ENCODE measurements at regions of chr10 and their contacts with region 1.

Region 1: DNA sequence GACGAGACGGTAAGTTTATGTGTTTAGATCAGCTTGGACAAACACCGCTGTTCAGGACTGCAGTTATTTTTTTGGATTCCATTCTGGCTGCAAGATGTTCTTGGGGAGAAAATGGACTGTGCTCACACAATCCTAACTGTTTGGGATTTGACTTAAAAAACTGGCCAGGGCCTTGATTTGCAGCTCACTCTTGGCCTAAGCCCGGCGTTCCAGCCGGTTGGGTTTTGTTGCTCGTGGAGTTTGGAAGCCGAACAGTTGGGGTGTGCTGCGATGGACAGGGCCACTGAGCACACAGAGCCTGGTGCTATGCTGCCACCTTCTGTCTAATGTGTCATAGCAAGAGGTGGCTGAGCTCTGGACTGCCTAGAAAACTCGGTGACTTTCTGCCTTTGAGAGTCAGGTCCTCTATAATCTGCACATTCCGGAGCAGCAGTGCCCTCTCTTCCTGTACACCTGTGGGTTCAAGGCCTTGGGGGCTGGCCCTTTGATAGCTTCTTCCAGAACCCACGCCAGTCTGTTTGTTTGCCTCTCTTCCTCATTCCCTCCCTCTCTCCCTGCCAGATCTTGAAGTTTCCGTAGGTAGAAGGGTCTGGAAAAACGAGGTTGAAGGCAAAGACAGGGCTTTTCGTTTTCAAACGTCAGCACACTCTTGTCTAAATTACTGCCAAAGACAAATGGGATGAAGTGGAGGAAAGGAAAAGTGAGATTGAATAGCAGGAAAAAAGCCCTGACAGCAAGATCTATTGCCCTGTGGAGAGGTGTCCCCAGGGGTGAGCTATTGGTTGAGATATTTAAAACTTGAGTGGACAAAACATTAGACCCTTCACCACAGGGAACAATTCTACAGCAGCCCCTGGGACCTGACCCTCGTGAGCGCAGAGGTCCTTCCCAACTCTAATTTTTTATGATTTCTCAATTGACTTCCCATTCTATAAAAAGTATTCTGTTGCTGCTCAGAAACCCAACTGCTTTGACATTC is 167.5 kb upstream of the HABP2 start:
- DNase-seq: peak; percentile 79
- H3K4me3 ChIP-seq: no peak overlapping the region
- H3K27ac ChIP-seq: peak overlapping the region; percentile 42 to 59 (median 48)
- H3K4me1 ChIP-seq: peaks cover 7 to 42% (median 12%) of the 10 kb centered on the region in 4 donors
- H3K27me3 ChIP-seq: no peaks in the 10 kb centered on the region
- CTCF ChIP-seq: peak; percentile 69 to 85 (median 71)
- EP300 ChIP-seq: no peak
- POLR2A ChIP-seq: no peak

Region 2: GRCh38 chr10:112471878-112472487 is 913.3 kb before region 1 on chr10:
- in situ Hi-C with region 1: loop called in 2 of 4 experiments (anchors 25 kb)
- intact Hi-C with region 1: no loop called
- DNase-seq: no peak
- H3K4me3 ChIP-seq: no peak overlapping the region
- H3K27ac ChIP-seq: no peak overlapping the region
- H3K4me1 ChIP-seq: peaks cover 0 to 14% (median 4%) of the 10 kb centered on the region in 4 donors
- H3K27me3 ChIP-seq: no peaks in the 10 kb centered on the region
- CTCF ChIP-seq: peak; percentile 59 to 73 (median 64)
- EP300 ChIP-seq: no peak
- POLR2A ChIP-seq: no peak

Region 3: GRCh38 chr10:112565434-112566053 is 819.8 kb before region 1 on chr10:
- in situ Hi-C with region 1: loop called in 2 of 4 experiments (anchors 25 kb)
- intact Hi-C with region 1: no loop called
- DNase-seq: peak; percentile 32
- H3K4me3 ChIP-seq: no peak overlapping the region
- H3K27ac ChIP-seq: no peak overlapping the region
- H3K4me1 ChIP-seq: peaks cover 0 to 13% (median 2%) of the 10 kb centered on the region in 4 donors
- H3K27me3 ChIP-seq: no peaks in the 10 kb centered on the region
- CTCF ChIP-seq: peak; percentile 55 to 85 (median 68)
- EP300 ChIP-seq: no peak
- POLR2A ChIP-seq: no peak

Region 4: GRCh38 chr10:112721080-112721698 is 664.1 kb before region 1 on chr10:
- in situ Hi-C with region 1: loop called in 1 of 4 experiments (anchors 25 kb)
- intact Hi-C with region 1: no loop called
- DNase-seq: no peak
- H3K4me3 ChIP-seq: no peak overlapping the region
- H3K27ac ChIP-seq: no peak overlapping the region
- H3K4me1 ChIP-seq: peaks cover 0 to 10% (median 5%) of the 10 kb centered on the region in 4 donors
- H3K27me3 ChIP-seq: no peaks in the 10 kb centered on the region
- CTCF ChIP-seq: peak; percentile 60 to 74 (median 68)
- EP300 ChIP-seq: no peak
- POLR2A ChIP-seq: no peak

Region 5: DNA sequence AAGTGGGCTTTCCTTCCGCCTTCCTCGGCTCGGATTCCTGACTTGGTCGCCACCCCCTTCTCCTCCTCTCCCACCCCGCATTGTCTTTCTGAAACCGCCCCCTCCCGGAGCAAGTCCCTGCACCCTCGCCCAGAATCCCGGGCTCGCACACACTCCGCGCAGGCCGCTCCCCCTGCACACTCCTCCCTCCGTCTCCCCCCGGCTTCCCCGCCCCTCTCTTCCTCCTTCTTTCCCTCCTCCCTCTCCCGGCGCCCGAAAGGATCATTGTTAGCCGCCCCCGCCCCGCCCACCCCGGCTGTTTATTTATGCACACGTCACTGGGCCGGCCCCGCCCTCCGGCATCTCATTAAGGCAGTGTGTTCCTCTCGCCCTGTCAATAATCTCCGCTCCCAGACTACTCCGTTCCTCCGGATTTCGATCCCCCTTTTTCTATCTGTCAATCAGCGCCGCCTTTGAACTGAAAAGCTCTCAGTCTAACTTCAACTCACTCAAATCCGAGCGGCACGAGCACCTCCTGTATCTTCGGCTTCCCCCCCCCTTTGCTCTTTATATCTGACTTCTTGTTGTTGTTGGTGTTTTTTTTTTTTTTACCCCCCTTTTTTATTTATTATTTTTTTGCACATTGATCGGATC is 435.3 kb before region 1 on chr10 and contains the start of gene TCF7L2:
- in situ Hi-C with region 1: loop called in 2 of 4 experiments (anchors 25 kb)
- intact Hi-C with region 1: loop called (anchors 5 kb)
- DNase-seq: peak; percentile 96
- H3K4me3 ChIP-seq: peak within 1 kb of the TSS; percentile 61 to 91 (median 86)
- H3K27ac ChIP-seq: peak within 1 kb of the TSS; percentile 95 to 98 (median 96)
- H3K4me1 ChIP-seq: peaks cover 11 to 57% (median 44%) of the 10 kb centered on the region in 4 donors
- H3K27me3 ChIP-seq: no peaks in the 10 kb centered on the region
- CTCF ChIP-seq: no peak
- EP300 ChIP-seq: no peak
- POLR2A ChIP-seq: peak; percentile 85
- total RNA-seq, gene TCF7L2: 84.6 to 249 (median 137) TPM

Region 6: DNA sequence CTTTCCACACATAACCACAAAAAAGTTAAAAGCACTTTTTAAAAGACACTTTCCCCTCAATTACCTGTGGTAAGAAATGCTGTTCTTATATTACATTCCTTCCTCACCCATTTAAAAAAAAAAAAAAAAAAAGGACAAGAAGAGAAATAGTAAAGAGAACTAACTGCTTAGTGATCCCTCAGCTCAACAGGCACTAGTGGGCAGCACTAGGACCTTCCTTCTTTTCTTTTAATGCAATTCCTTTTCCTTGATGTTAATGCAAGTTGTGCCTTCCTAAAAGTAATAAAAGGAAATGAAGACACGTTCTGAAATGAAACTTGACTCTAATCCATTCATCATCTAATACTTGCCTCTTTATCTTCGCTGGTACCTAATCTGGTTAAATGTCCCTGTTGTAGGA is 245.6 kb before region 1 on chr10:
- in situ Hi-C with region 1: no loop called
- intact Hi-C with region 1: loop called (anchors 10 kb)
- DNase-seq: no peak
- H3K4me3 ChIP-seq: no peak overlapping the region
- H3K27ac ChIP-seq: peak overlapping the region in 2 of 4 donors; percentile 61 to 71
- H3K4me1 ChIP-seq: peaks cover 5 to 22% (median 10%) of the 10 kb centered on the region in 4 donors
- H3K27me3 ChIP-seq: no peaks in the 10 kb centered on the region
- CTCF ChIP-seq: no peak
- EP300 ChIP-seq: no peak
- POLR2A ChIP-seq: no peak

Region 7: DNA sequence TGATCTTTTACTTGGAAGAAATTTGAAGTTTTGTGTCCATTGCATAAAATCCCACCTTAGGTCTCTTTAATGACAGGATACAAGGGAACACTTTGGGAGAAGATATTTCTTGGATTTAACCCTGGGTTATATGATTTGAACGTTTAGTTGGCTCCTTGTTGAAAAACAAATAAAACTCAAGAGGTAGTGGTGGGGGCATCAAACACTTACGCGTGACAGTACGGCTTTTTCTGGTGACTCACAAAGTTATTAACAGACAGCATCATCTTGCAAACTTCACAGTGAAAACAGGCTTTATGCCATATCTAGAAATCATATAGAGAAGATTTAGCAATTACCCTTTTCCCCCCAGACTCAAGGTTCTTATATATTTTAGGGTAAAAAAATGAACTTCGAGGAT is 277.8 kb after region 1 on chr10:
- in situ Hi-C with region 1: no loop called
- intact Hi-C with region 1: no loop called
- DNase-seq: no peak
- H3K4me3 ChIP-seq: no peak overlapping the region
- H3K27ac ChIP-seq: no peak overlapping the region
- H3K4me1 ChIP-seq: no peaks in the 10 kb centered on the region
- H3K27me3 ChIP-seq: no peaks in the 10 kb centered on the region
- CTCF ChIP-seq: no peak
- EP300 ChIP-seq: no peak
- POLR2A ChIP-seq: no peak

Measured in transverse colon (tissue), 4 donors.